ENCODE measurements at regions of chr4 and their contacts with region 1.

Region 1: GRCh38 chr4:152100379-152101201 is 339.8 kb upstream of the GATB start:
- DNase-seq: peak; percentile 70 to 96 (median 80)
- ATAC-seq: peak; percentile 84
- H3K4me3 ChIP-seq: peak overlapping the region; percentile 32
- H3K4me3 Mint-ChIP-seq: peak overlapping the region; percentile 80
- H3K27ac ChIP-seq: peak overlapping the region; percentile 86 to 89
- H3K27ac Mint-ChIP-seq: peak overlapping the region; percentile 95
- H3K4me1 ChIP-seq: peaks cover 100% of the 10 kb centered on the region
- H3K4me1 Mint-ChIP-seq: peaks cover 90% of the 10 kb centered on the region
- H3K27me3 ChIP-seq: no peaks in the 10 kb centered on the region
- H3K27me3 Mint-ChIP-seq: no peaks in the 10 kb centered on the region
- CTCF ChIP-seq: no peak

Region 2: DNA sequence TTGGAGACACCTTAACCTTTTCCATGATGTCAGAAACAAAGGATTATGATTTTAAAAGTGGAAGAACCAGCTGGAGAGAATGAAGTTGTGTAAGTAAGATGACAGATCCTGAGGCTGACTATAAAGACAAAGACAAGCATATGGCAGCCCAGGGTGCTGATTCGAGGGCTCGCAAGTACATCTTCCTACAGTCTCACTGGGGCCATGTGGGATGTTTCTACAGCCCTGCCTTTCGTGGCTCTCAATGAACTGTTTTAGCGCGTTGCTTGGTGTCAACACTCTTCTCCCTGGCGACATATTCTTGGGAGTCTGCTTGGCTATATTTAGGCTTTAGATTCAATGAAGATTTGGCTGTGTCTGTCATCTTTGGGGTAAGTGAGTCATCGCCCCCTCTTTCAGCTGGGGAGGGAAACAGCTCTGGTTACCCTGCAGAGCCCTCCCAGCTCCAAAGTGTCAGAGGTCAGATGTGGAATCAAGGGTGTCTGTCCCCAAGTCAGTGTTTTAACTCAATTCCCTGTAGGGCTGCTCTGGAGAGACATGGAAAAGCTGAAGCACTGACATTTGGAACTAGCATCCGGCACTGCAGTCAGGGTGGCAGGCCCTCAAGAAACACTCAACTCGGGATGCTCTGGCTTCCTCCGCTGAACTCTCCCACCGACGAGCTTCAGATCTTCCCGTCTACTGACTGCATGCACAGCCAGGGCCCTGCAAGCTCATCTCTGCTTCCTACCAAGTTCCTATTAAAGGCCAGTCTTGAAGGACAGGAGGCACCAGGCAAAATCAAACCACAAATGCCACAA is 405.5 kb before region 1 on chr4:
- CTCF ChIA-PET with region 1: no interaction called
- POLR2A ChIA-PET with region 1: no interaction called
- intact Hi-C with region 1: no loop called
- DNase-seq: no peak
- ATAC-seq: no peak
- H3K4me3 ChIP-seq: no peak overlapping the region
- H3K4me3 Mint-ChIP-seq: no peak overlapping the region
- H3K27ac ChIP-seq: no peak overlapping the region
- H3K27ac Mint-ChIP-seq: no peak overlapping the region
- H3K4me1 ChIP-seq: no peaks in the 10 kb centered on the region
- H3K4me1 Mint-ChIP-seq: no peaks in the 10 kb centered on the region
- H3K27me3 ChIP-seq: no peaks in the 10 kb centered on the region
- H3K27me3 Mint-ChIP-seq: no peaks in the 10 kb centered on the region
- CTCF ChIP-seq: no peak

Region 3: DNA sequence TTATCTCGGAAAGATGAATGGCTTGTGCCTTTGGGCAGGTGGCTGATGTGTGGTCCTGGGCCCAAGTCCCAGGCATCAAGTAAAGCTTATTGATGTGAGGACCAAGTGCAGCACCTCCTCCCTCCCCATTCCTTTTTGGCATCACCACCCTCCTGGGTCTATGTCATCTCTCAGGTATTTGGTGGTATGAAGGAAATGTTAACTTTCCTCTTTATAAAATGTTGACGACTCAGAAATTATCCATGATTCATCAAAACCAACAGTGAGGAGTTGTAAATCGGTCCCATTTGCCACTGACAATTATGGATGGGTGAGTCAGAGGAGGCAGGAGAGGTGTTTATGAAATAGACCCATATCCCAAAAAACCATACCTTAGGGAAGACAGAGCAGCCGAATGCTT is 110.4 kb before region 1 on chr4:
- CTCF ChIA-PET with region 1: no interaction called
- POLR2A ChIA-PET with region 1: interaction called, 25 read pairs
- intact Hi-C with region 1: loop called in 1 of 2 experiments (anchors 1 kb)
- DNase-seq: no peak
- ATAC-seq: no peak
- H3K4me3 ChIP-seq: no peak overlapping the region
- H3K4me3 Mint-ChIP-seq: no peak overlapping the region
- H3K27ac ChIP-seq: peak overlapping the region in 1 of 2 donors; percentile 42
- H3K27ac Mint-ChIP-seq: peak overlapping the region; percentile 91
- H3K4me1 ChIP-seq: peaks cover 52% of the 10 kb centered on the region
- H3K4me1 Mint-ChIP-seq: peaks cover 66% of the 10 kb centered on the region
- H3K27me3 ChIP-seq: no peaks in the 10 kb centered on the region
- H3K27me3 Mint-ChIP-seq: no peaks in the 10 kb centered on the region
- CTCF ChIP-seq: no peak

Region 4: GRCh38 chr4:152063885-152064240 is 36.7 kb before region 1 on chr4:
- CTCF ChIA-PET with region 1: interaction called, 4 read pairs
- POLR2A ChIA-PET with region 1: interaction called, 11 read pairs
- intact Hi-C with region 1: no loop called
- DNase-seq: peak; percentile 19 to 75 (median 39)
- ATAC-seq: peak; percentile 98
- H3K4me3 ChIP-seq: no peak overlapping the region
- H3K4me3 Mint-ChIP-seq: no peak overlapping the region
- H3K27ac ChIP-seq: no peak overlapping the region
- H3K27ac Mint-ChIP-seq: peak overlapping the region; percentile 25
- H3K4me1 ChIP-seq: peaks cover 30% of the 10 kb centered on the region
- H3K4me1 Mint-ChIP-seq: peaks cover 59% of the 10 kb centered on the region
- H3K27me3 ChIP-seq: no peaks in the 10 kb centered on the region
- H3K27me3 Mint-ChIP-seq: no peaks in the 10 kb centered on the region
- CTCF ChIP-seq: no peak

Region 5: GRCh38 chr4:152112887-152113286 is 12.3 kb after region 1 on chr4:
- CTCF ChIA-PET with region 1: interaction called, 5 read pairs
- POLR2A ChIA-PET with region 1: interaction called, 47 read pairs
- intact Hi-C with region 1: loop called in 1 of 2 experiments (anchors 1 kb)
- DNase-seq: peak in 1 of 14 experiments; percentile 20
- ATAC-seq: no peak
- H3K4me3 ChIP-seq: no peak overlapping the region
- H3K4me3 Mint-ChIP-seq: no peak overlapping the region
- H3K27ac ChIP-seq: no peak overlapping the region
- H3K27ac Mint-ChIP-seq: peak overlapping the region; percentile 93
- H3K4me1 ChIP-seq: peaks cover 71% of the 10 kb centered on the region
- H3K4me1 Mint-ChIP-seq: peaks cover 90% of the 10 kb centered on the region
- H3K27me3 ChIP-seq: no peaks in the 10 kb centered on the region
- H3K27me3 Mint-ChIP-seq: no peaks in the 10 kb centered on the region
- CTCF ChIP-seq: no peak

Region 6: GRCh38 chr4:152243896-152244595 is 143.5 kb after region 1 on chr4:
- CTCF ChIA-PET with region 1: no interaction called
- POLR2A ChIA-PET with region 1: interaction called, 18 read pairs
- intact Hi-C with region 1: no loop called
- DNase-seq: peak in 3 of 14 experiments; percentile 11 to 34 (median 27)
- ATAC-seq: no peak
- H3K4me3 ChIP-seq: no peak overlapping the region
- H3K4me3 Mint-ChIP-seq: no peak overlapping the region
- H3K27ac ChIP-seq: no peak overlapping the region
- H3K27ac Mint-ChIP-seq: peak overlapping the region; percentile 37
- H3K4me1 ChIP-seq: peaks cover 30% of the 10 kb centered on the region
- H3K4me1 Mint-ChIP-seq: peaks cover 52% of the 10 kb centered on the region
- H3K27me3 ChIP-seq: no peaks in the 10 kb centered on the region
- H3K27me3 Mint-ChIP-seq: no peaks in the 10 kb centered on the region
- CTCF ChIP-seq: no peak

Region 7: GRCh38 chr4:152352622-152353116 is 252.1 kb after region 1 on chr4:
- CTCF ChIA-PET with region 1: no interaction called
- POLR2A ChIA-PET with region 1: interaction called, 7 read pairs
- intact Hi-C with region 1: loop called in 1 of 2 experiments (anchors 1 kb)
- DNase-seq: peak in 4 of 14 experiments; percentile 9 to 39 (median 26)
- ATAC-seq: peak; percentile 88
- H3K4me3 ChIP-seq: no peak overlapping the region
- H3K4me3 Mint-ChIP-seq: peak overlapping the region; percentile 50
- H3K27ac ChIP-seq: no peak overlapping the region
- H3K27ac Mint-ChIP-seq: no peak overlapping the region
- H3K4me1 ChIP-seq: no peaks in the 10 kb centered on the region
- H3K4me1 Mint-ChIP-seq: peaks cover 36% of the 10 kb centered on the region
- H3K27me3 ChIP-seq: no peaks in the 10 kb centered on the region
- H3K27me3 Mint-ChIP-seq: no peaks in the 10 kb centered on the region
- CTCF ChIP-seq: no peak